ENCODE measurements at regions of chr3 and their contacts with region 1.

Region 1: GRCh38 chr3:151327571-151328198 is 1.7 kb downstream of the P2RY13 start:
- DNase-seq: no peak
- ATAC-seq: no peak
- H3K4me3 ChIP-seq: no peak overlapping the region
- H3K27ac ChIP-seq: no peak overlapping the region
- H3K4me1 ChIP-seq: no peaks in the 10 kb centered on the region
- H3K27me3 ChIP-seq: 0 out of 2 replicates have a peak, but pooled peaks cover 3% of the 10 kb centered on the region
- CTCF ChIP-seq: peak; percentile 75; the same call in 1 of the 2 replicates

Region 2: GRCh38 chr3:150870396-150870795 is 457.3 kb before region 1 on chr3:
- CTCF ChIA-PET with region 1: interaction called, 10 read pairs
- POLR2A ChIA-PET with region 1: no interaction called
- in situ Hi-C with region 1: no loop called
- intact Hi-C with region 1: no loop called
- DNase-seq: no peak
- ATAC-seq: no peak
- H3K4me3 ChIP-seq: no peak overlapping the region
- H3K27ac ChIP-seq: no peak overlapping the region
- H3K4me1 ChIP-seq: no peaks in the 10 kb centered on the region
- H3K27me3 ChIP-seq: peaks cover 7% of the 10 kb centered on the region; the same call in 1 of the 2 replicates
- CTCF ChIP-seq: no peak

Region 3: DNA sequence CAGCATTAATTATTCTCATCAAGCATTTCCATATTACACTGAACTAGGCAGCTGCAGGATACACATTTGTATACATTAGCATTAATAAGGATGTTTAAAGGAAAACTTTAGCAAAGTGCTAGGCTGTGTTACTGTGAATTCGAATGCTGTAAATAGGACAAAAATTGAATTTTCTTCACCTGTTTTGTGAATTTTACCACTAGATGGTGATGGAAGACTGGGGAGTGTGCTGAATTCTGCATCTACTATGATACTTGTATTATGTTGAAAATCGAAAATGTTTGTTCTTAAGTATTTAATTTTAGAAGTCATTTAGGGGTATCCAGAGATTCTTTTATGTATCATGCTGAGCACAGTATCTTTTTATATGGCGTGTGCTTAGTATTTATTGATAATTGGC is 37.0 kb before region 1 on chr3:
- CTCF ChIA-PET with region 1: no interaction called
- POLR2A ChIA-PET with region 1: no interaction called
- in situ Hi-C with region 1: no loop called
- intact Hi-C with region 1: loop called (anchors 5 kb)
- DNase-seq: no peak
- ATAC-seq: no peak
- H3K4me3 ChIP-seq: no peak overlapping the region
- H3K27ac ChIP-seq: no peak overlapping the region
- H3K4me1 ChIP-seq: no peaks in the 10 kb centered on the region
- H3K27me3 ChIP-seq: no peaks in the 10 kb centered on the region
- CTCF ChIP-seq: peak; percentile 58; the same call in 1 of the 2 replicates

Region 4: GRCh38 chr3:151384741-151385174 is 57.1 kb after region 1 on chr3 and contains the start of gene P2RY12:
- CTCF ChIA-PET with region 1: no interaction called
- POLR2A ChIA-PET with region 1: no interaction called
- in situ Hi-C with region 1: no loop called
- intact Hi-C with region 1: no loop called
- DNase-seq: no peak
- ATAC-seq: no peak
- H3K4me3 ChIP-seq: no peak within 1 kb of the TSS
- H3K27ac ChIP-seq: no peak within 1 kb of the TSS
- H3K4me1 ChIP-seq: no peaks in the 10 kb centered on the region
- H3K27me3 ChIP-seq: no peaks in the 10 kb centered on the region
- CTCF ChIP-seq: no peak
- total RNA-seq, gene P2RY12: not detected

Region 5: GRCh38 chr3:151777880-151778279 is 450.2 kb after region 1 on chr3:
- CTCF ChIA-PET with region 1: interaction called, 11 read pairs
- POLR2A ChIA-PET with region 1: no interaction called
- in situ Hi-C with region 1: no loop called
- intact Hi-C with region 1: no loop called
- DNase-seq: no peak
- ATAC-seq: no peak
- H3K4me3 ChIP-seq: no peak overlapping the region
- H3K27ac ChIP-seq: no peak overlapping the region
- H3K4me1 ChIP-seq: no peaks in the 10 kb centered on the region
- H3K27me3 ChIP-seq: no peaks in the 10 kb centered on the region
- CTCF ChIP-seq: no peak

Measured in Panc1 (cell line).